GM12878 (cell line): ENCODE measurements at regions of chr1 and their contacts with region 1.

Region 1: DNA sequence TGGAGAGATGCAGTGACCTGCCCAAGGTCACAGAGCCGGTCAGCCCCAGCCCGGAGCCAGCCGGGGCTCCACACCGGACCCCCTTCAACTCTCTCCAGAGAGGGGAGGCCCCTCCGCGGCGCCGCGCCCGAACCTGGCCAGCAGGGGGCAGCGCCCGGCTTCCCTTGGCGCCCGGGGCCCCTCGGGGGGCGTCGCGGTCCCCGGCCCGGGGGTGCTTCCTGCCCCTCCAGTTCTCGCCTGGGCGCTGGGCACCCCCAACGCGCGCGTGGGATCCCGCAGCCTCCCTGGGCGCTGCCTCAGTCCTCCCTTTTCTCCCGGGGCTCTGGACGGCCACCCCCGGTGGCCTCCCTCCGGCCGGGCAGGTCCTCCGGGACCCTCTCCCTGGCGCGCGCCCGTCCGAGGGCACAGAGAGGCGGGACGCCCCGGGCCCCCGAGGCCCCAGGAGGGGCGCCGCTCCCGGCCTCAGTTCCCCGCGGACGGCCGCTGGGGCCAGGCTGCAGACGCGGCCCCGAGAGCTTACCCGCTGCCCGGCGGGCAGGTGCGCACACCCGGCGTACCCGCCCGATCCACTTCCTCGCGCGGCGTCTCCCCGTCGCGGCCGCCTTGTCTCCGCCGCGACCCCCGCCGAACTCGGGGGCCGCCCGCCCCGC is 406 bp downstream of the HTR1D start:
- DNase-seq: no peak
- ATAC-seq: peak; percentile 81
- H3K4me3 ChIP-seq: no peak overlapping the region
- H3K27ac ChIP-seq: no peak overlapping the region
- H3K4me1 ChIP-seq: no peaks in the 10 kb centered on the region
- H3K27me3 ChIP-seq: peaks cover 0 to 5% of the 10 kb centered on the region in 2 experiments; a peak in 3 of 4 replicates
- CTCF ChIP-seq: peak; percentile 46 to 60 (median 51); a peak in 5 of 6 replicates
- EP300 ChIP-seq: no peak
- POLR2A ChIP-seq: no peak
- RAD21 ChIP-seq: peak; percentile 32

Region 2: DNA sequence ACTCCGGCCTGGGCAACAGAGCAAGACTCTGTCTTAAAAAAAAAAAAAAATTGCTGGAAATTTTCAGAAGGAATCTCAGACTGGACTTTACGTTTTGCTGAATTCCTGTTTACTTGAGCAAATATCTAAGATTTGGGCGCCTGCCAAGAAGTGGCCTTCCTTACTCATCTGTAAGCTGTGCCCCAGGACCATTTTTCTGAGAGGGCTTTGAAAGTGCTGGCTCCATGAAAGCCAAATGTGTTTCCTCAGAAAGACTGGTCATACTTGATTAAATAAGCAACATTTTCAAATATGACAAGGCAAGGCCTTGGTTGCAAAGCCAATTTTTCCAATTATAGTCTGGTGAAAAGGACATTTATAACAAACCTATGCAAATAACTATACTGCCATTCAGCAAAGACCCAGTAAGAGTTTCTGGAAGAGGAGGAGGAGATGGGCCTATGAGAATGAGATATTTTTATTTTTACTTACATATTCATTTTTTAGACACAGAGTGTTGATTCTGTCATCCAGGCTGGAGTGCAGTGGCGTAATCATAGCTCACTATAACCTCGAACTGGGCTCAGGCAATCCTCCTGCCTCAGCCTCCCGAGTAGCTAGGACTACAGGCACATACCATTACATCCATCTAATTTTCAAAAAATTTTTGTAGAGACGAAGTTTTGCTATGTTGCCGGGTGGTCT is 56.7 kb after region 1 on chr1:
- CTCF ChIA-PET with region 1: no interaction called
- POLR2A ChIA-PET with region 1: no interaction called
- RAD21 ChIA-PET with region 1: no interaction called
- SMC1A ChIA-PET with region 1: no interaction called
- in situ Hi-C with region 1: no loop called
- intact Hi-C with region 1: loop called (anchors 10 kb)
- DNase-seq: no peak
- ATAC-seq: no peak
- H3K4me3 ChIP-seq: no peak overlapping the region
- H3K27ac ChIP-seq: no peak overlapping the region
- H3K4me1 ChIP-seq: no peaks in the 10 kb centered on the region
- H3K27me3 ChIP-seq: no peaks in the 10 kb centered on the region
- CTCF ChIP-seq: no peak
- EP300 ChIP-seq: no peak
- POLR2A ChIP-seq: no peak
- RAD21 ChIP-seq: no peak